Esophagus squamous epithelium (tissue), 5 donors: ENCODE measurements at regions of chr19 and their contacts with region 1.

Region 1: GRCh38 chr19:850221-850978 is 1.7 kb upstream of the ELANE start:
- DNase-seq: no peak
- H3K4me3 ChIP-seq: peak overlapping the region in 1 of 4 donors; percentile 47
- H3K27ac ChIP-seq: peak overlapping the region; percentile 55 to 90 (median 78)
- H3K4me1 ChIP-seq: peaks cover 15 to 40% (median 16%) of the 10 kb centered on the region in 3 donors
- H3K27me3 ChIP-seq: peaks cover 0 to 93% (median 1%) of the 10 kb centered on the region in 4 donors
- CTCF ChIP-seq: no peak
- POLR2A ChIP-seq: no peak

Region 2: DNA sequence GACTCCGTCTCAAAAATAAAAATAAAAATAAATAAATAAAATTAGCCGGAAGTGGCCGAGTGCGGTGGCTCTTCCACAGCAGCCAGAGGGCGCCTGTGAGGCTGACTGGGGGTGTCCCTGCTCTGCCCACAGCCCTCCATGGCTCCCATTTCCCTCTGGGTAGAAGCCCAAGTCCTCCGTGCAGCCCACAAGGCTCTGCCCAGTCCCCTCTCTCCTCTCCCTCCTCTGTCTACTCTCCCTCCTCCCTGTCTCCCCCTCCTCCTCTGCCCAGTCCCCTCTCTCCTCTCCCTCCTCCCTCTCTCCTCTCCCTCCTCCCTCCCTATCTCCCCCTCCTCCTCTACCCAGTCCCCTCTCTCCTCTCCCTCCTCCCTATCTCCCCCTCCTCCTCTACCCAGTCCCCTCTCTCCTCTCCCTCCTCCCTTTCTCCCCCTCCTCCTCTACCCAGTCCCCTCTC is 79.0 kb before region 1 on chr19:
- intact Hi-C with region 1: loop called (anchors 10 kb)
- DNase-seq: no peak
- H3K4me3 ChIP-seq: no peak overlapping the region
- H3K27ac ChIP-seq: no peak overlapping the region
- H3K4me1 ChIP-seq: peaks cover 0 to 16% (median 0%) of the 10 kb centered on the region in 3 donors
- H3K27me3 ChIP-seq: peaks cover 0 to 9% (median 0%) of the 10 kb centered on the region in 4 donors
- CTCF ChIP-seq: peak; percentile 19 to 58 (median 46)
- POLR2A ChIP-seq: no peak

Region 3: DNA sequence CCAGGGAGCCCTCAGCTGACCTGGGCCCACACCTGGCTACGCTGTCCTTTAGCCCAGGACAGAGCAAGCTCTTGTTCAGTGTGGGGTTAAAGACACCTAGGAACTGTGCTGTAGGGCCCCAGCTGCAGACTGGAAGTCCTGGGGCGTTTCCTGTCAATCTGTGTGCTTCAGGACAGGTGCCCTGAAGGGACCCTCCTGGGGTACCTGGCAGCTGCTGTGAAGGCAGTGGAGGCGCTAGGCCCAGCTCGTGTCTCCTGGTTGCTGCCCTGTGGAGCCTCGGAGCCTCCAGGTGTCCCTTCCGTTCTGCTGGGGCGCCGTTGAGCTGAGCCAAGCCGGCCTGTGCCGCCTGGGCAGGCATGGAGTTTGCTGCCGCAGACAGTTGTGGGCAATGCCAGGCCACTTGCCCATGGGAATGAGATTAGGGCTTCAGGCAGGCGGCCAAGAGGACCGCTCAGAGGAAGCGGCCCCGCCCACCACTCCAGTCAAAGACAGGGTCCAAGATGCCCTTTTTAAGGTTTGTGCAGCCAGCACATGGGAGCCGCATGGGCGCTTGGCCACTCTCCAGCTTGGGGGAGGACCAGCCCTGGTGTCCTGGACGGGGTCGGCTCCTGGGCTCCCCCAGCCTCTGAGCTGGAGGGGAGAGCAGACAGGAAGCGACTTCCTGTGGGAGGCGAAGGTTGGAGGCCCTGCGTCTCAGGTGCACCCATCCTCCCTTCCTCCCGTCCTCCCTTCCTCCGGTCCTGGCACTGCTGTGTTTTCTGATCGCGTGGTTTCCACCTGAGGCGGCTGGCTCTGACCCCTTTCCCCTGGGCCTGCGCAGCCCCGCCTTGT is 49.2 kb before region 1 on chr19:
- intact Hi-C with region 1: no loop called
- DNase-seq: no peak
- H3K4me3 ChIP-seq: peak overlapping the region; percentile 13 to 99 (median 70)
- H3K27ac ChIP-seq: peak overlapping the region; percentile 95 to 100 (median 100)
- H3K4me1 ChIP-seq: peaks cover 53 to 86% (median 55%) of the 10 kb centered on the region in 3 donors
- H3K27me3 ChIP-seq: no peaks in the 10 kb centered on the region
- CTCF ChIP-seq: no peak
- POLR2A ChIP-seq: no peak

Region 4: GRCh38 chr19:984165-984967 is 134.0 kb after region 1 on chr19 and contains the start of gene WDR18:
- intact Hi-C with region 1: loop called (anchors 10 kb)
- DNase-seq: peak; percentile 56
- H3K4me3 ChIP-seq: peak within 1 kb of the TSS; percentile 76 to 100 (median 95)
- H3K27ac ChIP-seq: peak within 1 kb of the TSS; percentile 87 to 96 (median 91)
- H3K4me1 ChIP-seq: peaks cover 16 to 45% (median 21%) of the 10 kb centered on the region in 3 donors
- H3K27me3 ChIP-seq: peaks cover 0 to 12% (median 0%) of the 10 kb centered on the region in 4 donors
- CTCF ChIP-seq: peak in 5 of 6 experiments; percentile 18 to 71 (median 41)
- POLR2A ChIP-seq: peak in 2 of 4 donors; percentile 36 to 65
- total RNA-seq, gene WDR18: 28.2 to 70.1 (median 53.0) TPM